ENCODE measurements at regions of chr10 and their contacts with region 1.

Region 1: GRCh38 chr10:82796510-82796909 is 921.5 kb downstream of the NRG3 start:
- DNase-seq: no peak
- ATAC-seq: peak; percentile 77
- H3K4me3 ChIP-seq: no peak overlapping the region
- H3K27ac ChIP-seq: no peak overlapping the region
- H3K4me1 ChIP-seq: no peaks in the 10 kb centered on the region
- H3K27me3 ChIP-seq: no peaks in the 10 kb centered on the region
- CTCF ChIP-seq: peak; percentile 17 to 47 (median 22); a peak in 3 of 6 replicates
- EP300 ChIP-seq: no peak
- POLR2A ChIP-seq: no peak
- RAD21 ChIP-seq: peak; percentile 79

Region 2: DNA sequence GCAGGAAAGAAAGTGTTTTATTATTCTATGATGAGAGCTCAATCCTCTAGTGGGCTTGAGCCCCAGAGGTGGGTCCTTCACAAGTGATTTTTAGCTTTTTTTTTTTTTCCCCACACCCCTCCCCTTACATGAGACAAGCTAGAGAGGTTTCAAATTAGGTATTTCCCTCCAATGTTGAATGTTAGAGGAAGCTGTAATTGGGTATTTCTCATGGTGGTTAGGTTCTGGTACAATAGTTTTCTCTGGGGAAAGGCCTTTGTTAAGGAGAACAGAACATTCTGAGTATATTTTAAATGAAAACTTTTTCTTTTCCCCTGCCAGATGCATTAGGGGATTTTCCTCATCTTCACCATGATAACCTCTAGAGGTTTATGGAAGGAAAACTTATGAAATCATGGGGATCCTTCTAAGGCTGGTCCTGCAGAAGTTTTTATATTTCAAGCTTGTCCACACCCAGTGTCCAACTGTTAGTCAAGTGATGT is 118.2 kb after region 1 on chr10:
- CTCF ChIA-PET with region 1: interaction called, 17 read pairs
- POLR2A ChIA-PET with region 1: no interaction called
- RAD21 ChIA-PET with region 1: interaction called, 12 read pairs
- SMC1A ChIA-PET with region 1: interaction called, 10 read pairs
- in situ Hi-C with region 1: no loop called
- intact Hi-C with region 1: loop called (anchors 2 kb)
- DNase-seq: peak; percentile 55
- ATAC-seq: peak; percentile 94
- H3K4me3 ChIP-seq: no peak overlapping the region
- H3K27ac ChIP-seq: no peak overlapping the region
- H3K4me1 ChIP-seq: no peaks in the 10 kb centered on the region
- H3K27me3 ChIP-seq: no peaks in the 10 kb centered on the region
- CTCF ChIP-seq: no peak
- EP300 ChIP-seq: no peak
- POLR2A ChIP-seq: no peak
- RAD21 ChIP-seq: peak; percentile 10; the same call in 1 of the 2 replicates

Region 3: GRCh38 chr10:82953909-82954308 is 157.4 kb after region 1 on chr10:
- CTCF ChIA-PET with region 1: interaction called, 24 read pairs
- POLR2A ChIA-PET with region 1: no interaction called
- RAD21 ChIA-PET with region 1: interaction called, 6 read pairs
- SMC1A ChIA-PET with region 1: interaction called, 10 read pairs
- in situ Hi-C with region 1: no loop called
- intact Hi-C with region 1: no loop called
- DNase-seq: no peak
- ATAC-seq: peak; percentile 59
- H3K4me3 ChIP-seq: no peak overlapping the region
- H3K27ac ChIP-seq: no peak overlapping the region
- H3K4me1 ChIP-seq: no peaks in the 10 kb centered on the region
- H3K27me3 ChIP-seq: no peaks in the 10 kb centered on the region
- CTCF ChIP-seq: peak in 1 of 3 experiments; percentile 24; a peak in 1 of 6 replicates
- EP300 ChIP-seq: no peak
- POLR2A ChIP-seq: no peak
- RAD21 ChIP-seq: peak; percentile 36; the same call in 1 of the 2 replicates

Region 4: DNA sequence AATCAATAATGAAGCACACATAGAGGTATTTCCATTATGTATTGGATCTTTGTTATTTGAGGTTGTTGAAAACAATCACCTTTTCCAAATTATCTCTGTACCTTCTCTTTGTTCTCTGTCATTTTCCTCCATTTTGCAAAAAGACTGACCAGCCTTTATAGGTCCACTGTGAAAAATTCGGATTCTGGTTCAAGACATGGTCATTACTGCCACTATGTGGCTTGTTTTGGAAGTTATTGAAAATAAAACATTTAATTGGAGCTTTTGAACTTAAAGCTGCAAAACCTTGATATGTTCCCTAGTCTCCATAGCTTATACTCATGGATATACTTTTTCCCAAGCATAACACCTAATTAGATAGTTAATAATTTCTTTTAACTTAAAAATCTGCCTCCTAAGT is 172.9 kb after region 1 on chr10:
- CTCF ChIA-PET with region 1: interaction called, 119 read pairs
- POLR2A ChIA-PET with region 1: no interaction called
- RAD21 ChIA-PET with region 1: interaction called, 68 read pairs
- SMC1A ChIA-PET with region 1: interaction called, 126 read pairs
- in situ Hi-C with region 1: no loop called
- intact Hi-C with region 1: loop called (anchors 1 kb)
- DNase-seq: no peak
- ATAC-seq: peak; percentile 66
- H3K4me3 ChIP-seq: no peak overlapping the region
- H3K27ac ChIP-seq: no peak overlapping the region
- H3K4me1 ChIP-seq: no peaks in the 10 kb centered on the region
- H3K27me3 ChIP-seq: no peaks in the 10 kb centered on the region
- CTCF ChIP-seq: peak in 2 of 3 experiments; percentile 18 to 55; a peak in 3 of 6 replicates
- EP300 ChIP-seq: no peak
- POLR2A ChIP-seq: no peak
- RAD21 ChIP-seq: peak; percentile 90

Region 5: GRCh38 chr10:83050815-83051214 is 254.3 kb after region 1 on chr10:
- CTCF ChIA-PET with region 1: interaction called, 4 read pairs
- POLR2A ChIA-PET with region 1: no interaction called
- RAD21 ChIA-PET with region 1: no interaction called
- SMC1A ChIA-PET with region 1: no interaction called
- in situ Hi-C with region 1: no loop called
- intact Hi-C with region 1: loop called (anchors 1 kb)
- DNase-seq: no peak
- ATAC-seq: peak; percentile 48
- H3K4me3 ChIP-seq: no peak overlapping the region
- H3K27ac ChIP-seq: no peak overlapping the region
- H3K4me1 ChIP-seq: no peaks in the 10 kb centered on the region
- H3K27me3 ChIP-seq: no peaks in the 10 kb centered on the region
- CTCF ChIP-seq: no peak; a peak in 1 of 6 replicates
- EP300 ChIP-seq: no peak
- POLR2A ChIP-seq: no peak
- RAD21 ChIP-seq: peak; percentile 22; the same call in 1 of the 2 replicates

Region 6: GRCh38 chr10:83373671-83374070 is 577.2 kb after region 1 on chr10:
- CTCF ChIA-PET with region 1: no interaction called
- POLR2A ChIA-PET with region 1: no interaction called
- RAD21 ChIA-PET with region 1: no interaction called
- SMC1A ChIA-PET with region 1: interaction called, 3 read pairs
- in situ Hi-C with region 1: no loop called
- intact Hi-C with region 1: loop called (anchors 5 kb)
- DNase-seq: no peak
- ATAC-seq: peak; percentile 80
- H3K4me3 ChIP-seq: no peak overlapping the region
- H3K27ac ChIP-seq: no peak overlapping the region
- H3K4me1 ChIP-seq: no peaks in the 10 kb centered on the region
- H3K27me3 ChIP-seq: no peaks in the 10 kb centered on the region
- CTCF ChIP-seq: peak; percentile 7 to 30 (median 26); a peak in 4 of 6 replicates
- EP300 ChIP-seq: no peak
- POLR2A ChIP-seq: no peak
- RAD21 ChIP-seq: 0 out of 2 replicates have a peak, but pooled peaks have one; percentile 17

Measured in GM12878 (cell line).